Caco-2 (cell line): ENCODE measurements at regions of chrX and their contacts with region 1.

Region 1: GRCh38 chrX:7147978-7148824 is at the start of gene PUDP:
- DNase-seq: peak; percentile 80 to 87
- H3K4me3 ChIP-seq: peak within 1 kb of the TSS; percentile 87
- H3K4me3 Mint-ChIP-seq: peak within 1 kb of the TSS; percentile 75
- H3K27ac Mint-ChIP-seq: peak within 1 kb of the TSS; percentile 35
- H3K4me1 ChIP-seq: peaks cover 25% of the 10 kb centered on the region
- H3K4me1 Mint-ChIP-seq: peaks cover 10% of the 10 kb centered on the region
- H3K27me3 ChIP-seq: no peaks in the 10 kb centered on the region
- H3K27me3 Mint-ChIP-seq: no peaks in the 10 kb centered on the region
- CTCF ChIP-seq: no peak
- total RNA-seq, gene PUDP: 54.3 and 57.5 TPM in 2 replicates

Region 2: GRCh38 chrX:7115557-7115956 is 32.6 kb before region 1 on chrX:
- CTCF ChIA-PET with region 1: no interaction called
- POLR2A ChIA-PET with region 1: no interaction called
- intact Hi-C with region 1: no loop called
- DNase-seq: no peak
- H3K4me3 ChIP-seq: no peak overlapping the region
- H3K4me3 Mint-ChIP-seq: no peak overlapping the region
- H3K27ac Mint-ChIP-seq: no peak overlapping the region
- H3K4me1 ChIP-seq: peaks cover 14% of the 10 kb centered on the region
- H3K4me1 Mint-ChIP-seq: peaks cover 2% of the 10 kb centered on the region
- H3K27me3 ChIP-seq: no peaks in the 10 kb centered on the region
- H3K27me3 Mint-ChIP-seq: no peaks in the 10 kb centered on the region
- CTCF ChIP-seq: no peak

Region 3: DNA sequence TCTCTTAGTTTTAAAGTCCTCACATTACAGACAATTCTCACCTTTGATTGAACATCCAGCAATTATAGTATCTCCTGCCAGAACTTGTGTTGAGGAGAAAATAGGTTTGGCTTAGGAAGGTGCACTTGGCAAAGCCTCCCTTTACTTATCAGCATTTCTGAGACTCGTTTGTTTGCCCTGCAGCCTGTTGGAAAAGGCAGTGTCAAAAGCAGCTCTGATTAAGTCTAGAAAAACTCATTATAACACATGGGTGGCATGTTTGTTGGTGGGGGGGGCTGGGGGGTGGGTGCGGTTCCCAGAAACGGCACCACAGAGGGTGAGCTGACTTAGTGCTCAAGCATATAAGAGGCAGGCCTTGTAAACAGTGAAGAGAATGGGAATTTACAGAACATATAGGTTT is 21.4 kb after region 1 on chrX:
- CTCF ChIA-PET with region 1: no interaction called
- POLR2A ChIA-PET with region 1: no interaction called
- intact Hi-C with region 1: no loop called
- DNase-seq: no peak
- H3K4me3 ChIP-seq: no peak overlapping the region
- H3K4me3 Mint-ChIP-seq: no peak overlapping the region
- H3K27ac Mint-ChIP-seq: no peak overlapping the region
- H3K4me1 ChIP-seq: no peaks in the 10 kb centered on the region
- H3K4me1 Mint-ChIP-seq: no peaks in the 10 kb centered on the region
- H3K27me3 ChIP-seq: no peaks in the 10 kb centered on the region
- H3K27me3 Mint-ChIP-seq: no peaks in the 10 kb centered on the region
- CTCF ChIP-seq: no peak

Region 4: GRCh38 chrX:7219184-7219601 is 71.0 kb after region 1 on chrX:
- CTCF ChIA-PET with region 1: no interaction called
- POLR2A ChIA-PET with region 1: no interaction called
- intact Hi-C with region 1: loop called (anchors 2 kb)
- DNase-seq: peak; percentile 58 to 68
- H3K4me3 ChIP-seq: peak overlapping the region; percentile 15; the same call in 1 of the 2 replicates
- H3K4me3 Mint-ChIP-seq: peak overlapping the region; percentile 81
- H3K27ac Mint-ChIP-seq: peak overlapping the region; percentile 94
- H3K4me1 ChIP-seq: peaks cover 29% of the 10 kb centered on the region
- H3K4me1 Mint-ChIP-seq: peaks cover 23% of the 10 kb centered on the region
- H3K27me3 ChIP-seq: no peaks in the 10 kb centered on the region
- H3K27me3 Mint-ChIP-seq: no peaks in the 10 kb centered on the region
- CTCF ChIP-seq: no peak